AG04450 (cell line): ENCODE measurements at regions of chr4 and their contacts with region 1.

Region 1: DNA sequence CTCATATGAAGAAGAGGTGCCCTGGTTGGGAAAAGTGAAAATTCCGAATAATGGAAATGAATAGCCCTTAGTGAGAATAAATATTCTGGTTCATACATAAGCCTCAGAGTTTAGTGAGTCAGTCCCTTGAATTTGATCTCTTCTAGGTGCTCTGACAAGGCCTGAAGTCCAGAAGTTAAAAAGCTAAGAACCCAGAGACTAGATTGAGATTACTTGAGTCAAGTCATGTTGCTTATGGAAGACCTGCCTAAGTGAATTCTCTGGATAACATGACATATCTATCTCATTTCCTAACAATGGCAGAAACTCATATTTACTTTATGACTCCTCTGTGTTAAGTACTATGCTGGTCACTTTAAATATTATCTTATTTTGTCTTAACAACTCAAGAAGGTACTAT is 10.5 kb upstream of the PRSS48 start:
- DNase-seq: no peak
- H3K4me3 ChIP-seq: no peak overlapping the region
- H3K27ac ChIP-seq: no peak overlapping the region
- H3K27me3 ChIP-seq: no peaks in the 10 kb centered on the region
- CTCF ChIP-seq: no peak

Region 2: DNA sequence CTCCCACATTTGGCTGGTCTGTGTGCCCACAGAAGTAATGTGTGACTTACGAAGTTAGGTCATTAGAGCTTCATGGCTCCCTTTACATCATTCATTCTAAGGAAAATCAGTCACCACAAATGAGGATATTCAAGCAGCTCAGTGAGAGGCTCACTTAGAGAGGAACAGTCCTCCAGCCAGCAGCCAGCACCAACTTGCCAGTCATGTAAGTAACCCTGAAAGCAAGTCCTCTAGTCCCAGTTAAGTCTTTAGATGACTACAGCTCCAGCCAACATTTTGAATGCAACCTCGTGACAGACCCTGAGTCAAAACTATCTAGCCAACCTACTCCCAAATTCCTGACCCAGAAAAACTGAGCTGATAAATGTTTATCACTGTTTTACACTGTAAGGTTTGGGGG is 322.7 kb before region 1 on chr4:
- CTCF ChIA-PET with region 1: no interaction called
- POLR2A ChIA-PET with region 1: no interaction called
- DNase-seq: no peak
- H3K4me3 ChIP-seq: no peak overlapping the region
- H3K27ac ChIP-seq: no peak overlapping the region
- H3K27me3 ChIP-seq: no peaks in the 10 kb centered on the region
- CTCF ChIP-seq: no peak

Region 3: DNA sequence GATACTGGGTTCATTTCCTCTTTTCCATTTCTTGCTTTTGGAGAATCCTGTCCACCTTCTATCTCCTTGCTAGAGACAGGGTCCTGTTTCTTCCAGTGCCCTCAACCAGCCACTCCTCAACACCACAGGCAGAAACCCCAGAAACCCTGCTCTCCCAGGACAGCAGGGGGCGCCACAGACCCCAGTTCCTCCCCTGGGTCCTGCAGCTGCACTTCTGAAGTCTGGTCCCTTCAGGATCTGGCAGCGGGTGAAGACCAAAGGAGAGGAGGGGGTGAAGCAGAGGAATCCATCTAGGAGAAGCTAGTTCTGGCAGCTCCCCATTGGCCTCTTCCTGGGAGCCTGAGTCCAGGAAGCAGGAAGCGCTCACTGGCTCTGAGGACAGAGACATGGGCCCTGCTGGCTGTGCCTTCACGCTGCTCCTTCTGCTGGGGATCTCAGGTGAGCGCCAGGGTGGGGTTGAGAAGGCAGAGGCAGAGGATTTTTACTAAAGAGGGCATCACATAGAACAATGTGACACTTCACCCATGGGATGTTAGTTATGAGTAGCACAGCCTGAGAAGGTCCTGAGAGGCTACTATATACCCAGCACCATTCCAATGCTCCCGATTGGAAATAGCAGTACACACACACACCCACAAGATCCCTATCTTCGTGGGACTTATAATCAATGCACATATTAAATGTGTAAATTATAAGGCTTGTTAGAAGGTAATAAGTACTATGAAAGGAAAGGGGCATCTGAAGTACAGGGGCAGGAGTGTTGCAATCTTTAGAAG is 10.5 kb after region 1 on chr4 and contains the start of gene PRSS48:
- CTCF ChIA-PET with region 1: interaction called, 40 read pairs
- POLR2A ChIA-PET with region 1: no interaction called
- DNase-seq: no peak
- H3K4me3 ChIP-seq: no peak within 1 kb of the TSS
- H3K27ac ChIP-seq: no peak within 1 kb of the TSS
- H3K27me3 ChIP-seq: no peaks in the 10 kb centered on the region
- CTCF ChIP-seq: peak; percentile 80
- polyA plus RNA-seq, gene PRSS48: not detected in 2 replicates

Region 4: DNA sequence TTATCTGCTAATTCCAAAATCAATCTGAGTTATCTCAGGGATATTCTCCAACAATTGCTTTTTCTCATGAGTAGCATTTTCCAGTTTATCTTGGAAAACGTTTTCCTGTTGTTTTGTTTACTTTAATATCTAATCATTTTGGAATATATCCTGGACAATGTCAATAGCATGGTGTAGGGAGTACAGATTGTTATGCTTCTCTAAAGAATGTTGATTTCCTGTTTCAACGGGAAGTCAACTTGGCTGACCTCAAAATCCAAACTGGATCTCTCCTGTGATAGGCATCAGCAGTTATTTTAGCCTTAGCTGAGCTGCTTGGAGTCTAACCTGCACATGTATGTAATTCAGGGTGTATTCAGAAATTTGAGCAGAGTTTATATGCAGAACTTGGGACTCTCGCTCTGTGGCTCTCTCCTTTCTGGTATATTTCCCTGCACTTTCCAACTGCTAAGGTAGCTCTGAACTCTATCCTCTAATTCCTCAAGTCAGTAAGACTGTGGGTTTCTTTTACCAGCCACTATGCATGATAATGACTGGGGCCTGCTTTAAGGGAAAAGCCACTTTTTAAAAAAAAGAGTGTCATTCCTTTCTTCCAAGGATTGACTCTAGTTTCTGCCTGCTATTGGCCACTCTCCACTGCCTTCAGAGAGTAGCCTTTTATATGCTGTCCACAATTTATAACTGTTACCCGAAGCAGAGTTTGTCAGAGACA is 18.2 kb after region 1 on chr4:
- CTCF ChIA-PET with region 1: interaction called, 10 read pairs
- POLR2A ChIA-PET with region 1: interaction called, 8 read pairs
- DNase-seq: no peak
- H3K4me3 ChIP-seq: no peak overlapping the region
- H3K27ac ChIP-seq: no peak overlapping the region
- H3K27me3 ChIP-seq: no peaks in the 10 kb centered on the region
- CTCF ChIP-seq: no peak